ENCODE measurements at regions of chr2 and their contacts with region 1.

Region 1: GRCh38 chr2:116935097-116935824 is 879.2 kb upstream of the DDX18 start:
- DNase-seq: no peak
- ATAC-seq: no peak

Region 2: DNA sequence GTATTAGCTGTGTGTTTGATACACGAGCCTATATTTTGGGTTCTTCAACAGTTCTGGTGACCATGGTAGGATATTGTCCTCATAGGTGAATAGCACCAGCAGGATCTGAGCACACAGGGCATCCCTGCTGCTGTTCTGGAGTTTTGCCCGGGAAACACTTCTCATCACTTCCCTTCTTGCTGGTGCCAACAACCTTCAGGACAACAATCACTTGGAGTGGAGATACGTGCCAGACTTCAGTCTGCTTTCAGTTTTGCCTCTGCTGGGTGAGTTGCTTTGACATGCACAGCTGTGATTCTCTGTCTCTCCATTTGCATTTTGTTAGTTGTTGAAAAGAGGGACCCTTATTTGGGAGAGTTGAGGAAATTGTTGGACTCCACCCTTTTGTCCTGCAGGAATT is 468.0 kb before region 1 on chr2:
- intact Hi-C with region 1: no loop called
- DNase-seq: no peak
- ATAC-seq: no peak

Region 3: GRCh38 chr2:116810645-116811044 is 124.6 kb before region 1 on chr2:
- intact Hi-C with region 1: no loop called
- DNase-seq: no peak
- ATAC-seq: no peak

Region 4: GRCh38 chr2:116842164-116842563 is 93.1 kb before region 1 on chr2:
- intact Hi-C with region 1: no loop called
- DNase-seq: no peak
- ATAC-seq: no peak

Region 5: GRCh38 chr2:116911540-116911939 is 23.7 kb before region 1 on chr2:
- intact Hi-C with region 1: loop called in 1 of 2 experiments (anchors 2 kb)
- DNase-seq: no peak
- ATAC-seq: peak; percentile 51

Region 6: DNA sequence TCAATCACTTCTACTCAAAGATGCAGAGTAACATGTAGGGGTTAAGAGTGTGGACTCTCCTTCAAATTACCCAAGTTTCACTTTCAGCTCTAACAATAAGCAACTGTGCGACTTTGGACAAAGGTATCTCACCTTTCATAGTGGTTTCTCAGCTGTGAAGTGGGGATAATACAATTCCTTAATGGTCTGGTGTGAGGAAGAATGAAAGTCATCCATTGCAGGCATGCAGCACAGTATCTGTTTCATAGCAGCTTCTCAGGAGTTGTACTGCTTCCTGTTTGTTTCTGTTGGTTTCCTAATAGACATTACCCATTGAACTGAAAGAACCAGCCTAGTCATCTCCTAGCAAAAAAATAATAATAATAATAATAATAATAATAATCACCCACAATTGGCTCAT is 953.6 kb after region 1 on chr2:
- intact Hi-C with region 1: no loop called
- DNase-seq: no peak
- ATAC-seq: no peak